Activated CD4-positive, alpha-beta T cell treated with anti-CD3 and anti-CD28 coated beads, Interleukin-2, amount 10 ng/mL, durations not matched to agents 7 days and 5 days (primary cell): ENCODE measurements at regions of chr10 and their contacts with region 1.

Region 1: DNA sequence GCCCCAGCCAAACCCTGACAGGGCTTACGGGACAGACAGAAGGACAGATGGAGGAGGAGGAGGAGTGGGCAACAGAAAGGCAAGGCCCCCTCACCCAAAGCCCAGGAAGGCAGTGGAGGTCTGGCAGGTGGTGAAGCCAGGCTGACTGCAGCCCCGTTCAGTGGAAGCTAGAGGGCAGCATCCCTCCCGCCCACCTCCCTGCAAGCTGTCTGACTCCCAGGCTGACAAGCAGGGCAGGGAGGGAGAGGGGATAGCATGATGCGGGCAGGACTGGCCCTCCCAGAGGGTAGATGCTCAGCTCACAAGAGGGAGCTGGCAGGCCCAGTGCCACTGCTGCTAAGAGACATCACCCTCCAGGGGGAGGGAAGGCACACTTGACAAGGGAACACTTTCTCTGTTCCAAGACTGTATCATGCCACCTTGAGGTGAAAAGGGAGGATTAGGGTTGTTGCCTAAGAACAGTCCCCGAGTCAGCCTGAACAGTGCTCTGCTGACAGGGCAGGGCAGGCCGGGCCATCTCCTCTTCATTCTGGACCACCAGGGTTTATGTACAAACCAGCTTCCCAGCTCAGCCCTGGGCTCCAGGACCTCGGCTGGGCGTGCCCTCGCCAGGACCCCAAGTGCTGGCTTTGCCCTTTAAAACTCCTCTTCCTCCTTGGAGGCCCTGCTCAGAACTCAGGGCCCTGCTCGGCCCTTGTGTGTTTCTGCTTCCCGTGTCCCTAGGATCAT is 61.8 kb downstream of the RASGEF1A start:
- DNase-seq: peak; percentile 69
- H3K4me3 Mint-ChIP-seq: no peak overlapping the region
- H3K27ac Mint-ChIP-seq: no peak overlapping the region
- H3K4me1 Mint-ChIP-seq: peaks cover 9% of the 10 kb centered on the region
- H3K27me3 Mint-ChIP-seq: no peaks in the 10 kb centered on the region

Region 2: DNA sequence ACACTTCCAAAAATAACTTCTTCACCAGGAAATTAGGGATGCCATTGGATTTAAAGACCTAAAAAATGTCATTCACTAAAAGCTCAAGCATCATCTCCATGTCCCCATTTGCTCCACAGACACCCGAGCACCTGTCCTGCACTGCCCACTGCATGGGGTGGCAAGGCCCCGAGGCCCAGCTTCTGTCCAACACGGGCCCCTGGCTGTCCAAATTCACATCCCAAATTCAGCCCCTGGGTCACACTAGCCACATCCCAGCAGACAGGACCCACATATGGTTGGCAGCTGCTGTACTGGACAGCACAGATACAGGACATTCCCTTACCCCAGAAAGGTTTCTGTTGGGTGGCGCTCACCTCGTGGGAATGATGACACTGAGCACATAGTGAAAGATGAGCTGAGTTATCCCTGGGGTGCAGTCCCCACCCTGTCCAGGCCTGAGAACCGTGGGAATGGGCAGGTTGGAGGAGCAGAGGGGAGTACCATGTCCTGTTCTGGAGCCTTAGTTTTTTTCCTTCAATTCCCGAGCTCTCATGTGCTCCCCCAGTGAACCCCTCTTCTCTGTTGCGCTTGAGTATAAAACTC is 11.5 kb before region 1 on chr10:
- CTCF ChIA-PET with region 1: interaction called, 10 read pairs
- POLR2A ChIA-PET with region 1: no interaction called
- DNase-seq: peak; percentile 2
- H3K4me3 Mint-ChIP-seq: no peak overlapping the region
- H3K27ac Mint-ChIP-seq: no peak overlapping the region
- H3K4me1 Mint-ChIP-seq: no peaks in the 10 kb centered on the region
- H3K27me3 Mint-ChIP-seq: no peaks in the 10 kb centered on the region

Region 3: DNA sequence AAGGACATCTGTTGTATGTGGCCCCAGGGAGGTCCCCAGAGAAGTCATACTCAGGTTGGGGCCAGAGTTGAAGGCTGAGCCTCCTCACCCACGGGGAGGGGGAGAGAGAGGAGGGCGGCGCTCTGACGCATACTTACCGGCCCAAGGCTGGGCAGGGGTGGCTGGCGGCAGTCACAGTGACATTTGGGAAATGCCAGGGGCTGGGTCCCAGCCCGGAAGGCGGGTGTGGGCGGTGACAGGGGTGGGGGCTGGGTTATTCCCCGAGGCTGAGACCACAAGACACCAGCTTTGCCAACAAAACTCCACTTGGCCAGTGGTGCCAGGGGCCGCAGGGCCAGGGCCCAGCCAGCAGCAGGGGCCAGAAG is 20.7 kb after region 1 on chr10:
- CTCF ChIA-PET with region 1: interaction called, 17 read pairs
- POLR2A ChIA-PET with region 1: no interaction called
- DNase-seq: no peak
- H3K4me3 Mint-ChIP-seq: no peak overlapping the region
- H3K27ac Mint-ChIP-seq: no peak overlapping the region
- H3K4me1 Mint-ChIP-seq: peaks cover 31% of the 10 kb centered on the region
- H3K27me3 Mint-ChIP-seq: peaks cover 44% of the 10 kb centered on the region